Cardiac septum (tissue), 1 donor: ENCODE measurements at regions of chr1 and their contacts with region 1.

Region 1: GRCh38 chr1:205523891-205524793 is 19.7 kb downstream of the CDK18 start:
- DNase-seq: no peak

Region 2: DNA sequence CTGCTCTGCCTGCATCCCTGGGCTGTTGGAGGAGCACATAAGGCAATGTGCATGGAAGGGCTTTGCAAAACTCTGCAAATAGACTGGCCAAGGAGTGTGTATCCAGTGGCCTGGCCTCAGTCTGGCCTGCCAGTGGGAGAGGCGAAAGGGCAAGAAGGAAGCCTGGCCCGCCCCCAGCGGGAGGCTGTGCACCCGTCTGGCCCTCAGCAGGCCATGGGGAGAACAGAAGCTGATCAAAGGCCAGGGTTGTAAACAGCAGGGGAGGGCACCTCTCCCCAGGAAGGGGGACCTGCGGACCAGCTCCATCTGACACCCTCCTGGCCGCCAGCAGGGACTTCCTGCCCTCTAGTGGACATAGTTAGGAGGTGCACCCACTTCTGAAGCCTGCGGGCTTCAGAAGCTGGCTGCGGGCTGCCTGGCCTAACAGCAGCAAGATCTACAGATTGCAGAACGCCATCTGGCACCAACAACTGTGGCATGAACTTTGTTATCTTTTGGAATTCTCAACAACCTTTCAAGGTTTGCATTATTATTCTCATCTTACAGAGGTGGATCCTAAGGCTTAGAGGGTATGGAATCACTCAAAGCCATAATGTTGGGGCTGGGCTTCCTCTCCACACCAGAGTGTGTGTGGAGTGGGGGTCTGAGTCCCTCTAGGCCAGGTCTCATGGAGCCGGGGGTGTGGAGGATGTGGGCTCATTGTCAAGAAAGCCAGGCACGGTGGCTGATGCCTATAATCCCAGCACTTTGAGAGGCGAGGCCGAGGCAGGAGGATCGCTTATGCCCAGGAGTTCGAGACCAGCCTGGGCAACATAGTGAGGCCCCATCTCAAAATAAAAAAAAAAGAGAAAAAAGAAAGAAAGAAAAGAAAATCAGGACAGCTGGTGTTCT is 38.6 kb before region 1 on chr1:
- intact Hi-C with region 1: loop called (anchors 1 kb)
- DNase-seq: no peak

Region 3: DNA sequence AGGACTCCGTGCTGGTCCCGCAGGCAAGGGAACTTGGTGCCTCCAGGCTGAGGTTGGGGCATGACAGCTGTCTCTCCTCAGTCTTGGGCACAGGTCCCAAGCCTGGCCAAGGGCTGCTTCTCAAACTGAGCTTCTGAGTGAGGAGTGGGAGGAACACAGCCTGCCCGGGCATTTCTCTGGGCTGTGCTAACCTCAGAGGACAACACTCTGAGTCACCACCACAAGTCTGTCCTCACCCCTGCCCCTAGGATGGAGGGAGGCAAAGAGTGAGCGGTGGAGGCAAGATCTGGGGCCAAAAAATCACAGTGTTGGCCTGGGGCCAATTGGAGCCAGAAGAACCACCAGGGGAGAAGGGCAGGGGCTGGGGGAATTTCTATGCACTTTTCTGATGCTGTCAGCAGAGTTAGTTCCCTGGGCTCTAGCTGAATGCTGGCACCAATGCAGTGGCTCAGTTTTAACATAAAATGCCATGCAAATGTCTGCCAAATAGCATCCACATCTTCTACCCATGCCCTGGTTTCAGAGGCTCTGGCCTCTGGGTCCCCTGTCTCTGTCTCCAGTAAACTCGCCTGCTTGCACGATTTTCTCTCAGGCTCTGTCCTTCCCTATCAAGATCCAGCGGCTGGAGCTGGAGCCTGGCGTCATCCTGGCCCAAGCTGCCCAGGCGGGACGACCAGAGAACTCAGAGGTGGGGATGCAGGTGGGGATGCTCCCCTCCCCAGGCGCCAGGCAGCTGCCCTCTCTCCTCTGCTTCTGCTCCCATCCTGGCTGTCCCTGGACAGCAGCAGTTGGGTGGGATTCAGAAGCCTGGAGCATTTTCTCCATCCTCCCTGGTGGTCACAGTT is 30.7 kb before region 1 on chr1:
- intact Hi-C with region 1: loop called (anchors 1 kb)
- DNase-seq: no peak